PC-3 (cell line): ENCODE measurements at regions of chr1 and their contacts with region 1.

Region 1: DNA sequence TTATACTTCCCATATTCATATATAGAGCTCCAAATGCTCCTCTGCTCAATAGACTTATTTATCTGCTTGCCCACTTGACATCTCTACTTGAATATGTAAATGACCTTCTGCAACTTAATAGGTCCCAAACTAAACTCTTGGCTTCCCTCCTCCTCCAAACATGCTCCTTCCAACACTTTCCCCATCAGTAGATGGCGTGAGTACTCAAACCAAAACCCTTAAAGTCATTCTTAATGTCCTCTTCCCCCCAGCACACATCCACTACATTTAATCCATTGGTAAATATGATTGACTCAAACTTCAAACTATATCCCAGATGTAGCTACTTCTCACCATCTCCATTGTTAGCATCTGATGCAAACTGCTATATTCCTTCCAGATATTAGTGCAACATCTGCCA is 48.5 kb upstream of the PBX1 start:
- DNase-seq: peak; percentile 44
- ATAC-seq: peak; percentile 78
- H3K4me3 ChIP-seq: no peak overlapping the region
- H3K27ac ChIP-seq: no peak overlapping the region
- H3K4me1 ChIP-seq: no peaks in the 10 kb centered on the region
- H3K27me3 ChIP-seq: peaks cover 69% of the 10 kb centered on the region
- CTCF ChIP-seq: peak; percentile 53

Region 2: GRCh38 chr1:164320790-164321731 is 189.4 kb before region 1 on chr1:
- CTCF ChIA-PET with region 1: no interaction called
- POLR2A ChIA-PET with region 1: no interaction called
- intact Hi-C with region 1: no loop called
- DNase-seq: no peak
- ATAC-seq: peak; percentile 43
- H3K4me3 ChIP-seq: peak overlapping the region; percentile 52
- H3K27ac ChIP-seq: no peak overlapping the region
- H3K4me1 ChIP-seq: no peaks in the 10 kb centered on the region
- H3K27me3 ChIP-seq: peaks cover 48% of the 10 kb centered on the region
- CTCF ChIP-seq: no peak

Region 3: DNA sequence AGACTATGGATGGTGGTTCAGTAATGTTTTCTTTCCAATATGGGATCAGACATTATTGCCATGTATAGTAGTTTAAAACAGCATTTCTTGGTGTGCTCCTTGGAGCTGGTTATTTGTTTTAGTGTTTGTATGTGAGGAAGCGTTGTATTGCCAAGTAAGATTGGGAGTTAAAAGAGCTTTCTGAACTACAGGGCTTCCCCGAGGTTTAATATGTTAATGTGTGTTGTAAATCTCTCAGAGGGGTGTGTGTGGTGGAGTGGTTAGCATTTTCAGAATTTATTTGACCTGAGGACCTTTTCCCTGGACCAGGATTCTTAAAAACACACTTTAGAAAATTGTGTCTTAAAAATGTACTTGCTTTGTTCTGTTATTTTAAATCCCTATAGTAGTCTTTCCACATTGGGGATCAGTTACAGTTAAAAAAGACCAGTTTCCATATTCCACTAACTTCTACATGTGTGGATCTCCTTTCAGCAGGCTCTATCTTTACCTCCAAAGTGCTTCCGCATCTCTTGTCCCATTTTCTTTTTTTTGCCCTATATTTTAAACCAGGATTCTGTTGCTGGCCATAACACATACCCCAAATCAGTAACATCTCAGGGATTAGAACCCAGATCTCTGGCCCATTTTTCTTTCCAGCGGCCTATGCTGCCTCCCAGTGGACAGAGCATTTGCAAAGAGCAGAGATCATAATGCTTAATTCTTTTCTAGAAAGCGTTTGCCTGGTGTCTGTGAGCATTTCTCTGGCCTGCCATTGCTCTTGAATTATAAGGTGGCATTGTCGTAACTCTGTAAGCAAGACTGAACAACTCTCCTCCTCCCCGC is 107.2 kb after region 1 on chr1:
- CTCF ChIA-PET with region 1: no interaction called
- POLR2A ChIA-PET with region 1: no interaction called
- intact Hi-C with region 1: loop called (anchors 1 kb)
- DNase-seq: peak; percentile 70
- ATAC-seq: peak; percentile 31
- H3K4me3 ChIP-seq: no peak overlapping the region
- H3K27ac ChIP-seq: no peak overlapping the region
- H3K4me1 ChIP-seq: peaks cover 12% of the 10 kb centered on the region
- H3K27me3 ChIP-seq: no peaks in the 10 kb centered on the region
- CTCF ChIP-seq: peak; percentile 94

Region 4: GRCh38 chr1:164630626-164631396 is 120.4 kb after region 1 on chr1:
- CTCF ChIA-PET with region 1: no interaction called
- POLR2A ChIA-PET with region 1: no interaction called
- intact Hi-C with region 1: no loop called
- DNase-seq: no peak
- ATAC-seq: no peak
- H3K4me3 ChIP-seq: no peak overlapping the region
- H3K27ac ChIP-seq: no peak overlapping the region
- H3K4me1 ChIP-seq: no peaks in the 10 kb centered on the region
- H3K27me3 ChIP-seq: no peaks in the 10 kb centered on the region
- CTCF ChIP-seq: no peak